Common myeloid progenitor, CD34-positive (primary cell): ENCODE measurements at regions of chr19 and their contacts with region 1.

Region 1: GRCh38 chr19:49106648-49107135 is 7.5 kb upstream of the LIN7B start:
- DNase-seq: peak; percentile 60 to 76 (median 69)
- H3K4me3 ChIP-seq: no peak overlapping the region
- H3K27ac ChIP-seq: no peak overlapping the region
- H3K4me1 ChIP-seq: no peaks in the 10 kb centered on the region
- H3K27me3 ChIP-seq: no peaks in the 10 kb centered on the region

Region 2: DNA sequence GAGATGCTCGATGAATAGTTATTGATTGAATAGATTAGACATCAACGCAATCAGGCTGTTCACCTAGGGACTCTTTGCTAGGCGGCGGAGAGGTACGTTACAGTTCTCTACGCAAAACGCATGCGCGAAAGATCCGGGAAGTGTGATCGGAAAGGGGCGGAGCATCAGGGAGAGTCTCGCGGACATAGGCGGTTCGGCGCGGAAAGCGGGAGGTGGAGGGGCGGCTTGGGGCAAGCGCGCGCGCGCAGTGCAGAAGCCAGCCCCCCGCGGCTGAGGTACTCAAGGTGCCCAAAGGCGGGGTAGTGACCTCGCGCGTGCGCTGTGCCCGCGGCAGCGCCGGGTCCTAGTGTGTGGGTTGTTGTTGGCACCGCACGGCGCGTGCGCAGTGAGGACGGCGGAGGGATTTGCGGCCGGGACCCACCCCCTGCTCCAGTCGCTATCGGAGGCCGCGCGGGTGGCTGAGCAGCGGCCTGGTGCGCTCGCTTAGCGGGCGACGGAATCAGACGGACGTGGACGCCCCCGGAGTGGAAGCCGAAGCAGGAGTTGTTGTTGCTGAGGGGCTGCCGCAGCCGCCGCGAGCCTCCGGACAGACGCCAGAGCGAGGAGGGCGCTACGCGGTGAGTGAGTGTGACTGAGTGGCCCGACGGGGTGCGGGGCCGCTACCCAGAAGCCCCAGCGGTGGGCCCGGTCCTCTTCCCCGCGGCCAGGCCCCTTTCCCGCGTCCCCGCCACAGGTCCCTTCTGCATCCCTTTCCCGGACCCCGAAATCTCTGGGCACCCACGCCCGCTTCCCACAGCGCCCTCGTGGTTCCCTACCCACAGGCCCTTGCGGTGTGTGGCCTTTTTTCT is 21.4 kb before region 1 on chr19 and contains the start of gene SNRNP70:
- CTCF ChIA-PET with region 1: no interaction called
- POLR2A ChIA-PET with region 1: no interaction called
- DNase-seq: peak; percentile 100
- H3K4me3 ChIP-seq: peak within 1 kb of the TSS; percentile 82 to 99 (median 93)
- H3K27ac ChIP-seq: peak within 1 kb of the TSS; percentile 78 to 93
- H3K4me1 ChIP-seq: peaks cover 0 to 23% (median 20%) of the 10 kb centered on the region in 4 experiments
- H3K27me3 ChIP-seq: no peaks in the 10 kb centered on the region

Region 3: DNA sequence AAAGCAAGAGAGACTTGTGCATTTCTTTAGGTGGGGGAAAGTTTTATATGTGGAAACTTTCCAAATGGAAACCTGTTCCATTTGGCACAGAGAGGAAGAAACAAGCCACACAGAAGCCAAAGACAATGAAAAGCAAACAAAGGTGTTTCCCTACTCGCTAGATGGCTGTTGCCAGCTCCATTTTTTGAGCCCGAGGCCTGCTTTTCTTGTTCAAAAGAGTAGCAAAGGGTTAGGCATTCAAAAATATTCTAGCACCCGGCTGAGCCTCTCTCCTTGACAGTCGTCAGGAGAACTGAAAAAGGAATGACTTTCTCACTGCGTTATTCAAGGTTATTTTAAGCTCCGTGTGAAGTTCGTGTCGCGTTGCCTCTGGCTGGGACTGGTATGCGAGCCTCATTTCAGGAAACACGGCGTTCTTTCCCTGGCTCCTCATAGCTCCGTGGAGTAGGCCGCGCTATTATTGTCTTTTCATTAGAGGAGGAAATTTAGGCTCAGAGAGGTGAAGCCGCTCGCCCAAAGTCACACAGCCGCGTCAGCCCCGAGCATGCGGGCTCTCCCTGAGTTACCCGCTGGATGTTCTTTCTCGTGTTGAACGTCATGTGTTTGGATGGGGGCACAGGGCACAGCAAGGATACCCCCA is 58.5 kb after region 1 on chr19:
- CTCF ChIA-PET with region 1: no interaction called
- POLR2A ChIA-PET with region 1: no interaction called
- DNase-seq: no peak
- H3K4me3 ChIP-seq: no peak overlapping the region
- H3K27ac ChIP-seq: no peak overlapping the region
- H3K4me1 ChIP-seq: no peaks in the 10 kb centered on the region
- H3K27me3 ChIP-seq: peaks cover 0 to 3% (median 0%) of the 10 kb centered on the region in 5 experiments

Region 4: DNA sequence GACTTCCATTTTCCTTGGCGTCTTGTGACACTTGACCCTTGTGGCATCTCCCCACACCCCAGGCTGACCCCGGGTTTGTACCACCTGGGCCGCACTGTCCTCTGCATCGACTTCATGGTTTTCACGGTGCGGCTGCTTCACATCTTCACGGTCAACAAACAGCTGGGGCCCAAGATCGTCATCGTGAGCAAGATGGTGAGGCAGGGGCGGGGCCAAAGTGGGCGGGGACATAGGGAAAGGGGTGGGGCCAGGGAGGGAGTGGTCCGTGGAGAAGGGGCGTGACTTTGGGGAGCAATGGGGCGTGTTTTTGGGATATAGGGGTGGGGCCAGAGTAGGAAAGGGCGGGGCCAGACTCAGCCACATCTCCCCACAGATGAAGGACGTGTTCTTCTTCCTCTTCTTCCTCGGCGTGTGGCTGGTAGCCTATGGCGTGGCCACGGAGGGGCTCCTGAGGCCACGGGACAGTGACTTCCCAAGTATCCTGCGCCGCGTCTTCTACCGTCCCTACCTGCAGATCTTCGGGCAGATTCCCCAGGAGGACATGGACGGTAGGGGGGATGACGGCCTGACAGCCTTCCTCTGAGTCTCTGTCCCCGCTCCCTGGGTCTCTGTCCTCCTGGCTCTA is 93.7 kb after region 1 on chr19:
- CTCF ChIA-PET with region 1: interaction called, 10 read pairs
- POLR2A ChIA-PET with region 1: no interaction called
- DNase-seq: peak; percentile 15 to 27 (median 18)
- H3K4me3 ChIP-seq: no peak overlapping the region
- H3K27ac ChIP-seq: no peak overlapping the region
- H3K4me1 ChIP-seq: no peaks in the 10 kb centered on the region
- H3K27me3 ChIP-seq: no peaks in the 10 kb centered on the region

Region 5: GRCh38 chr19:49387936-49388372 is 281.3 kb after region 1 on chr19 and contains the start of gene KASH5:
- CTCF ChIA-PET with region 1: no interaction called
- POLR2A ChIA-PET with region 1: no interaction called
- DNase-seq: peak; percentile 85 to 87 (median 87)
- H3K4me3 ChIP-seq: peak within 1 kb of the TSS in 1 of 7 experiments; percentile 10
- H3K27ac ChIP-seq: no peak within 1 kb of the TSS
- H3K4me1 ChIP-seq: peaks cover 0 to 10% (median 4%) of the 10 kb centered on the region in 4 experiments
- H3K27me3 ChIP-seq: peaks cover 0 to 2% (median 0%) of the 10 kb centered on the region in 5 experiments